ENCODE measurements at regions of chr5 and their contacts with region 1.

Region 1: GRCh38 chr5:1174122-1174936 is 27.1 kb upstream of the SLC6A19 start:
- DNase-seq: peak; percentile 16 to 93 (median 64)

Region 2: DNA sequence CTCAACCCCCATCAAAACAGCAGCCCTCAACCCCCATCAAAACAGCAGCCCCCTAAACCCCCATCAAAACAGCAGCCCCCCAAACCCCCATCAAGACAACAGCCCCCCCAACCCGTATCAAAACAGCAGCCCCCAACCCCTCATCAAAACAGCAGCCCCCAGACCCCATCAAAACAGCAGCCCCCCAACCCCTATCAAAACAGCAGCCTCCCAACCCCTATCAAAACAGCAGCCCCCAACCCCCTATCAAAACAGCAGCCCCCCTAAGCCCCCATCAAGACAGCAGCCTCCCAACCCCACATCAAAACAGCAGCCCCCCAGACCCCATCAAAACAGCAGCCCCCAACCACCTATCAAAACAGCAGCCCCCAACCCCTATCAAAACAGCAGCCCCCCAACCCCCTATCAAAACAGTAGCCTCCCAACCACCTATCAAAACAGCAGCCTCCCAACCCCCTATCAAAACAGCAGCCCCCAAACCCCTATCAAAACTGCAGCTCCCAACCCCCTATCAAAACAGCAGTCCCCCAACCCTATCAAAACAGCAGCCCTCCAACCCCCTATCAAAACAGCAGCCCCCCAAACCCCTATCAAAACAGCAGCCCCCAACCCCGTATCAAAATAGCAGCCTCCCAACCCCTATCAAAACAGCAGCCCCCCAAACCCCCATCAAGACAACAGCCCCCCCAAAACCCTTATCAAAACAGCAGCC is 482.4 kb before region 1 on chr5:
- intact Hi-C with region 1: no loop called
- DNase-seq: no peak

Region 3: DNA sequence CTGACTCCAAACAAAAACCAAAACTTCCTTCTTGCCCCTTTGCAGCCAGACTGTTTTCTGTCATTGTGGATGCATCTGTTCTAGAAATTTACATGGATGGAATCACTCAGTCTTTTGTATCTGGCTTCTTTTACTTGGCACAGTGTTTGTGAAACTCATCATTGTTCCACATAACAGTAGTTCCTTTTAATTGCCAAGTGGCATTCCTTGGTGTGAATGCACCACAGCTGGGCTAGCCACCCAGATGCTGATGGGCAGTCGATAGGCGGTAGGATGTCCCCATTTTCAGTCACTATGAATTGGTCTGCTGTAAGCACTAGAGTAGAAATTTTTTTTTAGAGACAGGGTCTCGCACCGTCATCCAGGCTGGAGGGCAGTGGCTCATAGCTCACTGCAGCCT is 176.8 kb after region 1 on chr5:
- intact Hi-C with region 1: loop called (anchors 10 kb)
- DNase-seq: peak in 4 of 10 donors; percentile 39 to 91 (median 68)